Activated T-helper 1 cell treated with anti-CD3 and anti-CD28 coated beads, Interleukin-12 subunit alpha, Interleukin-12 subunit beta, Interleukin-2, Interleukin-4 antibody, amounts not matched to agents 30 ng/mL and 10 ng/mL and 1 ng/mL, durations not matched to agents 14 hours and 24 hours and 36 hours (primary cell): ENCODE measurements at regions of chr6 and their contacts with region 1.

Region 1: DNA sequence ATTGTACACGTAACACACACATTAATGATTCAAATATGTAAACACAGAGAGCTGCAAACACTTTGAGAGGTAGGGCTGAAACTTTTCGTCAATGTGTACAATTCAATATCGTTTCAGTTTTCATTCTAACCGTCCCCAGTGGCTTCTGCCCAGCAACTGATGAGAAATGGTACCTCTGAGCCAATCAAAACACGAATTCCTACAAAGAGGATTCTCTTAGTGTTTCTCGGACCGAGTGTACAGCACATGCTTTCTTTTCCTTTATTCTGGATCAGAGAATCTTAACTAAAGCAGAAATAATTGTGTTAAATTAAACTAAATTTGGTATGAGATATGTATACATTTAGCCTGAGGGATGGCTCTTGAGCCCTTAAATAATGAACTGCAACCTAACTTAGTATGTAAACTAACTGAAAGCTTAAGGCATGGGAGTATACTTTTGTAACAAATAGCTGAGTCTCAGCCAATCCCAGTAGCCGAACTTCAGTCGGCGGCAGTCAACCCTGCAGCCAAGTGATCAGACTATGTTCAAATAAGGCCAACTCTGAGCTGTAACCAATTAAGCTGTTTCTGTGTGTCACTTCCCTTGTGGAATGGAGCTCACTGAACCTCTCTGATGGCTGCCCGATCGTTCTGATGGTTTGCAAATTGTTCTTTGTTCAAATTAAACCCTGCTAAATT is 16.1 kb downstream of the BTN2A1 start:
- DNase-seq: peak; percentile 78
- H3K4me3 Mint-ChIP-seq: peak overlapping the region; percentile 99
- H3K27ac Mint-ChIP-seq: peak overlapping the region; percentile 100
- H3K4me1 Mint-ChIP-seq: peaks cover 46% of the 10 kb centered on the region
- H3K27me3 Mint-ChIP-seq: no peaks in the 10 kb centered on the region

Region 2: DNA sequence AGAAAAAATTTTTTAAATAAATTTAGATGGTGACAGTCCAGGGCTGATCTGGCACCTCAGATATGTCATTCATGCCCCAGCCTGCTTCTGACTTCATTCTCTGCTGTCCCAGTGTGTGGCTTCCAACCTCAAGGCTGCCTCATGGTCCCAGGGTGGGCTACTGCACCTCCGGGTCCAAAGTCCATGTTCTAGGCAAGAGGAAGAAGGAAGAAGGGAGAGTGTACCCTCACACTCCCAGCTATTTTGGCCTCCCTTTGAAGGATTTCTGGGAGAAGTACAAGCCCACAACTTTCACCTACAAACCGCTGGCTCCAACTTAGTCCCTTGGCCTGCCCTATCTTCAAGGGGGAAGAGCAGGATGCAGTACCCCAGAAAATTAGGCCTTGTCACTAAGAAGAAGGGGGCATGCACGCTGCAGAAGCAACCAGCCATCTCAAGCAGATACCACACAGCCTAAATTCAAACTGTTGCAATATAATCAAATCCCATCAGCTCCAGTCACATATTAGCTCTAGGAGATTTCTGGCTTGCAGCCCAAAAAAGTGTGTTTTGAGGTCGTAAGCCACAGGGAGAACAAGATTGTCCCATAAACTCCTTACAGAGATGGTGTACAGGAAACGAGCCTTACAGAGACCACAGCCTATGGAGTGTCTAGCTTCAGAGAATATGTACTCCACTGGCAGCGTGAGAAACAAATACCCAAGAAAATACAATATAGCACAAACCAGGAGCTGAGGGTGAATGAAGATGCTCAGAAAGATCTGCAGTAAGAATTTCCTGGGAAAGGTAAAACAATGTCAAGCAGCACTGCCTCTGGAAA is 109.8 kb before region 1 on chr6:
- intact Hi-C with region 1: loop called (anchors 1 kb)
- DNase-seq: peak; percentile 10
- H3K4me3 Mint-ChIP-seq: no peak overlapping the region
- H3K27ac Mint-ChIP-seq: no peak overlapping the region
- H3K4me1 Mint-ChIP-seq: peaks cover 45% of the 10 kb centered on the region
- H3K27me3 Mint-ChIP-seq: no peaks in the 10 kb centered on the region

Region 3: GRCh38 chr6:26401987-26402658 is 71.8 kb before region 1 on chr6 and contains the start of gene BTN3A1:
- intact Hi-C with region 1: loop called (anchors 1 kb)
- DNase-seq: peak; percentile 61
- H3K4me3 Mint-ChIP-seq: peak within 1 kb of the TSS; percentile 94
- H3K27ac Mint-ChIP-seq: peak within 1 kb of the TSS; percentile 97
- H3K4me1 Mint-ChIP-seq: peaks cover 56% of the 10 kb centered on the region
- H3K27me3 Mint-ChIP-seq: no peaks in the 10 kb centered on the region
- total RNA-seq, gene BTN3A1: 28.2 and 30.6 TPM in 2 replicates

Region 4: GRCh38 chr6:26421259-26422144 is 52.4 kb before region 1 on chr6:
- intact Hi-C with region 1: no loop called
- DNase-seq: peak; percentile 37
- H3K4me3 Mint-ChIP-seq: no peak overlapping the region
- H3K27ac Mint-ChIP-seq: no peak overlapping the region
- H3K4me1 Mint-ChIP-seq: peaks cover 4% of the 10 kb centered on the region
- H3K27me3 Mint-ChIP-seq: no peaks in the 10 kb centered on the region

Region 5: DNA sequence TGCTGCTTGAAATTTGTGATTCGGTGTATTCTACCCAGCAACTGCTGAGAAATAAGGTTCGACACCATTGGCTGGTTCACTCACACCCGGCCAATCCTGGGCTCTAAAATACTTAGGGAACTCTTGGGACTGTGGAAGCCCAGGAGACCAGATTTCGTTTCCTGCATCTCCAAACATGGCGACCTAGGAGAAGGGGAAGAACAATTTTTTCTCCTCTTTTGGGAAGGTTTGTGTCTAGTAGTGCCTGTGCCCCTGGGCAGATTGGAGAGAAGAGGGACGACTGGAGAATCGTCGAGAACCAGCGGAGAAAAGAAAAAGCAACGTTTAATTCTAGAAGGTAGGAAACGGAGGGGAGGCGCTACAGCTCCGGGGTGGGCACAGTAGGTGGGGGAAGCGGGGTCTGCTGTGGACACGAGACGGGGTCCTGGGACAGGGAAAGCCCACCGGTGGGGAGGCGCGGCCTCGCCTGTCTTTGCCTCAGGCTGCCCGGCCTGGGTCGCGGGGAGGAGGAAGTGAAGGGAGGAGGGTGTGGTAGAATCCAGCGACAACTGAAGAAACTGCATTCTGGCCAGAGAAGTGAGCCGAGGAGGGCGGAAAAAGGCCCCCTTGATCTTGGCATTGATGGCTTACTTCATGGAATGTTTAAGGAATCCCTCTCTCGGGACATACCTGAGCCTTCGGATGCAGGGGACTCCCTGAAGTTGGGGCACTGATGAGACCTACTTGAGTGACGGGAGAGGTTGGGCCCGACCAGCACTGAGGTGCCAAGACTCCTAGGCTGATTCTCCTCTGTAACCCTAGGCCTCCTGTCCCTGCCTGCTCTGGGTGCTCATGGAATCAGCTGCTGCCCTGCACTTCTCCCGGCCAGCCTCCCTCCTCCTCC is 15.9 kb before region 1 on chr6 and contains the start of gene BTN2A1:
- intact Hi-C with region 1: loop called (anchors 1 kb)
- DNase-seq: peak; percentile 68
- H3K4me3 Mint-ChIP-seq: peak within 1 kb of the TSS; percentile 100
- H3K27ac Mint-ChIP-seq: peak within 1 kb of the TSS; percentile 96
- H3K4me1 Mint-ChIP-seq: peaks cover 57% of the 10 kb centered on the region
- H3K27me3 Mint-ChIP-seq: no peaks in the 10 kb centered on the region
- total RNA-seq, gene BTN2A1: 19.9 TPM in 2 replicates

Region 6: DNA sequence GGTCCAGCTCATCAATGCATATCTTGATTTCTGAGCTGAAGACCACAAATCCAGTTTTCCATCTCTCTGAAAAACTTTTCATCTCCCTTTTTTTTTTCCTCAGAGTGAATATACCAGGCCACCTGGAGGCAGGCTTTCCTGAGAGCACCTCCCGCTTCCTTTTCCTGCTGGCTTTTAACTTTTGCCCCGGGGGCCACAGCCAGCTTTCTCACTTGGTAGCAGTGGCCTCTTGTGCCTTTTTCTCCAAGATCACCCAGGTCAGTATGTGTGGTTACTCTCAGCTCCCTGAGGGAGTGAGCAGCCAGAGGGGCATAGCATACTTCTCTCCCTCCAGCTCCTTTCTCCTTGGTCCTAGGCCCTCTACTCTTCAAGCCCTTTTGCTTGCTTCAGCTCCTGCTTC is 26.2 kb after region 1 on chr6 and contains the start of gene BTN1A1:
- intact Hi-C with region 1: no loop called
- DNase-seq: no peak
- H3K4me3 Mint-ChIP-seq: peak within 1 kb of the TSS; percentile 82
- H3K27ac Mint-ChIP-seq: no peak within 1 kb of the TSS
- H3K4me1 Mint-ChIP-seq: peaks cover 26% of the 10 kb centered on the region
- H3K27me3 Mint-ChIP-seq: peaks cover 52% of the 10 kb centered on the region
- total RNA-seq, gene BTN1A1: not detected in 2 replicates

Region 7: DNA sequence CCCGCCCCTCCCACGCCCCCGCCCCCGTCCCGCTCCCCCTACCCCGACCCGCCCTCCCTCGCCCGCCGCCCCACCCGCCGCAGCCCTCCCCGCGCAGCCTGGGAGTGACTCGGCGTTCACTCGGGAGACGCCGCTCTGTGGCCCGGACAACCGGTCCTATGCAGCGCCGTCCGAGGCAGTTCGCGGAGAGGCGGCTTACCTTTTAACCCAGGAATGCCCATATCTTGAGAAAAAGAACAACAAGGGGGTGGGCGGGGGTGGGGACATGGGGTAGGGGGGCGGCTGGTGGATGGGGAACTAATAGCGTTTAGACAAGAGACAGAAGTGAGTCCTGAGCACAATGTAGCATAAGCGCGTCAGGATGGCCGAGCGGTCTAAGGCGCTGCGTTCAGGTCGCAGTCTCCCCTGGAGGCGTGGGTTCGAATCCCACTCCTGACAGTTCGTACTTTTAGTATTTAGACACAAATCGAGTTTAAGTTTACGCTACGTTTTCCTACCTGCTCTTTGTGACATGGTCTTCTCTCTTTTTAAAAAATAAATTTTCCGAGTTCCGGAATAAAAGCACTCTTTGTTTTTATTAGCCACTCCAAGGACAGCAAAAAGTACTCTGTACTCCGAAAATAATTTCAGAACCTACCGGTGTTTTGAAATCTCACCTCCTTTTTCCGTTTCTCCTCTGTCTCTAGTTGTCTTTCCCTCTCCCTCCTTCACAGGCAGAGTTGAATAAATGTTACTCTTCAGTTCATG is 47.1 kb after region 1 on chr6:
- intact Hi-C with region 1: loop called (anchors 1 kb)
- DNase-seq: peak; percentile 78
- H3K4me3 Mint-ChIP-seq: peak overlapping the region; percentile 83
- H3K27ac Mint-ChIP-seq: peak overlapping the region; percentile 97
- H3K4me1 Mint-ChIP-seq: peaks cover 35% of the 10 kb centered on the region
- H3K27me3 Mint-ChIP-seq: peaks cover 3% of the 10 kb centered on the region

Region 8: DNA sequence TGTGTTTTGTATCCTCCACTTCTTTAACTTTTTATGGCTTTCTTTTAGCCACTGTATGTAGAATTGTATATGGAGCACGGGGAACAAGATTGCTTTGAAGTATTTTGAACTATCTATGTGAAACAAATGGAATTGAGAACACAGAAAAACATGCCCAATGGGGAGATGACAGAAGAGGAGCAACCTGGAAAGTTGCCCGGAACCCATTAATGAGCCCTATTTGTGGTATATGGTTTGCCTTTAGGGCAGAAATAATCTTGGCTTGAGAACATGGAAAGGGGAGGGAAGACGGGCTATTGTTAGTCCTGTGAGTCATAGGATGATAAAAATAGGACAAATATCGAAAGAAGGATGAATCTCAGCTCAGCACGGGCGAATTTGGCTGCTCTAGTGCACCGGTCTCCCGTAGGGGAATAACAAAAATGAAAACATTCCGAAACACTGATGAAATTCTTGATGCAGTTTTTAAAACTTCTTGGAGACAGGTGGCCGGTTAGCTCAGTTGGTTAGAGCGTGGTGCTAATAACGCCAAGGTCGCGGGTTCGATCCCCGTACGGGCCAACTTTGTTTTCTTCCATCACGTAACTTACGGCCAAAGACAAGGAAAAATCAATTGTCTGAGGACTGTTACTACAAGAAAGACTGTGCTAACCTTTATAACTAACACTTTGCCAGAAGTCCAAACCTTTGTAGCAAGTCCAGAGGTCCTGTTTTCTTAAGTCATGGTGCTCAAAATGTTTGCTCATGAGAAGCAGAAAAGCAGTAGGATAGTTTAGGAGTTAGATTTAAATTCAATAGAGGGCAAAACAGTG is 79.9 kb after region 1 on chr6:
- intact Hi-C with region 1: loop called (anchors 1 kb)
- DNase-seq: peak; percentile 72
- H3K4me3 Mint-ChIP-seq: no peak overlapping the region
- H3K27ac Mint-ChIP-seq: no peak overlapping the region
- H3K4me1 Mint-ChIP-seq: peaks cover 18% of the 10 kb centered on the region
- H3K27me3 Mint-ChIP-seq: peaks cover 2% of the 10 kb centered on the region

Region 9: GRCh38 chr6:26596579-26597388 is 122.9 kb after region 1 on chr6 and contains the start of gene ABT1:
- intact Hi-C with region 1: loop called (anchors 1 kb)
- DNase-seq: peak; percentile 97
- H3K4me3 Mint-ChIP-seq: no peak within 1 kb of the TSS
- H3K27ac Mint-ChIP-seq: no peak within 1 kb of the TSS
- H3K4me1 Mint-ChIP-seq: peaks cover 39% of the 10 kb centered on the region
- H3K27me3 Mint-ChIP-seq: peaks cover 27% of the 10 kb centered on the region
- total RNA-seq, gene ABT1: 32.6 and 32.9 TPM in 2 replicates

Region 10: DNA sequence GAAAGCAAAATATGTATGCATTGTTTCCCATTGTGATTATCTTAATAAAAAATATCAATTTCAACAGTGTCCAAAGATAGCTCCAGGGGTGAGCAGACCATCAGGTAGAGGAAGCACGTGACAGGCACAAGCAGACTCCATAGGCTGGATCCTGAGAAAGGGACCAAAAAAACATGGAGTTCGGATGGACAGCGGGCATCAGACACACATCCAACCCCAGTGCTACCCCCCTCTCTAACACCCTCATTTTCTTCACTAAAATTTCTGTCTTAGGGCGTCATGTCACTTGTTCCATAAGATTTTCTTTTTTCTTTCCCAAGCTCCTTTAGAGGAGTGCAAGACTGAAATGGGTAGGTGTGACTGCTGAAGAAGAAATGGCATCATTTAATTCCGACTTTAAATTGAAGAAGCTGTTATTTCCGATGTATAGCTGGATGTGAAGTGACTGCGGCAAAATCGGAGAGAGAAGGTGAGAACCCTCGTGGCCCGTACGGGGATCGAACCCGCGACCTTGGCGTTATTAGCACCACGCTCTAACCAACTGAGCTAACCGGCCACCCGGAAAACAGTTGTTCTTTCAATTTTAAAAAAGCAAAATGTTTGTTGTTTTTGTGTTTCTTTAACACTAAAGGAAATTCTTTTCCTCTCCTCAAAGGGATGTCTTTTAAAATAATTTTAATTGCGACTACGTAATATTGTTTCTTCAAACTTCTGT is 763.3 kb after region 1 on chr6:
- intact Hi-C with region 1: no loop called
- DNase-seq: no peak
- H3K4me3 Mint-ChIP-seq: peak overlapping the region; percentile 71
- H3K27ac Mint-ChIP-seq: peak overlapping the region; percentile 25
- H3K4me1 Mint-ChIP-seq: peaks cover 23% of the 10 kb centered on the region
- H3K27me3 Mint-ChIP-seq: peaks cover 46% of the 10 kb centered on the region